Common myeloid progenitor, CD34-positive (primary cell): ENCODE measurements at regions of chr10 and their contacts with region 1.

Region 1: DNA sequence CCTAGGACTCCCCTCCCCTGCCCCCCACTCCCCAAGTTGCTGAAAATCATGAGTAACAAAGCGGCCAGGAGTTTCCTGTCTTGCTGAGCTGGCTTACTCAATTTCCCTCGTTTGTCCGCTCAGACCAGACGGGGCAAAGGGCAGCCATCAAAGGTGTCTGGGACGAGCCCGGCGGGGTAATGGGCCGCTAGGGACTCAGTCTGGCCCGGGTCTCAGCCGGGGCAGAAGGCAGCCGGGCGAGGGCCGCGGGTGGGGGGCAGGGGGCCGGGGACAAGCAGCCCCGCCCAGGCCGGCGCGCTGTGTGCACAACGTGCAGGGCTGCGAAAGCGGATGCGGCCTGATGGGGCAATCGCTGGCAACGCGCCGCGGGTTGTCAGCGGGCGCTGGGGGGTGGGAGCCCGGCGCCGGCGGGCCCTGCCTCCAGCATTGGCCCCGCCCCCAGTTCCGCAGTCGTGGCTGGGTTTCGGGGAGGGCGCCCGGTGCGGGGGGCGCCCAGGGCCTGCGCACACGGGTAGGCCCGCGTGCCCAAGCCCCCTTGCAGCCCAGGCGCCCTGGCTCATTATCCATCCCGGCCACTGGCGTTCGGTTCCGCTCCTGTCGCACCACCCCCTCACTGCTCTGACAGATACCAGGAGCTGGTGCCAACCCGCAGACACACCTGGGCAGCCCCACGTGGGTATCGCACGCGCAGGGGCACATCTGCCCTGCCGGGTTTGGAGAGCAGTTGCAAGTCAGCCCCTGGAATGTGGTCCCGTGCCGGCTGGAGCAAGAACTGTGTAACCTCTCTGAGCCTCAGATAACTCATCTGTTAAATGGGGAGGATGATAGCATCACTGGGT is 35.1 kb downstream of the DNAJB12 start:
- DNase-seq: peak; percentile 88 to 94 (median 93)
- H3K4me3 ChIP-seq: peak overlapping the region in 5 of 7 experiments; percentile 40 to 71 (median 50)
- H3K27ac ChIP-seq: peak overlapping the region; percentile 78 to 94
- H3K4me1 ChIP-seq: peaks cover 22 to 94% (median 92%) of the 10 kb centered on the region in 4 experiments
- H3K27me3 ChIP-seq: no peaks in the 10 kb centered on the region

Region 2: GRCh38 chr10:72297968-72298773 is 21.5 kb before region 1 on chr10:
- CTCF ChIA-PET with region 1: interaction called, 48 read pairs
- POLR2A ChIA-PET with region 1: interaction called, 29 read pairs
- DNase-seq: peak; percentile 94 to 97 (median 97)
- H3K4me3 ChIP-seq: peak overlapping the region in 6 of 7 experiments; percentile 13 to 72 (median 56)
- H3K27ac ChIP-seq: peak overlapping the region; percentile 40 to 87
- H3K4me1 ChIP-seq: peaks cover 5 to 46% (median 30%) of the 10 kb centered on the region in 4 experiments
- H3K27me3 ChIP-seq: no peaks in the 10 kb centered on the region

Region 3: GRCh38 chr10:72308320-72308987 is 11.2 kb before region 1 on chr10:
- CTCF ChIA-PET with region 1: interaction called, 48 read pairs
- POLR2A ChIA-PET with region 1: interaction called, 6 read pairs
- DNase-seq: peak; percentile 73 to 92 (median 89)
- H3K4me3 ChIP-seq: peak overlapping the region in 1 of 7 experiments; percentile 11
- H3K27ac ChIP-seq: peak overlapping the region in 1 of 2 experiments; percentile 38
- H3K4me1 ChIP-seq: peaks cover 8 to 54% (median 36%) of the 10 kb centered on the region in 4 experiments
- H3K27me3 ChIP-seq: no peaks in the 10 kb centered on the region

Region 4: GRCh38 chr10:72419241-72419640 is 99.6 kb after region 1 on chr10:
- CTCF ChIA-PET with region 1: no interaction called
- POLR2A ChIA-PET with region 1: no interaction called
- DNase-seq: no peak
- H3K4me3 ChIP-seq: no peak overlapping the region
- H3K27ac ChIP-seq: no peak overlapping the region
- H3K4me1 ChIP-seq: no peaks in the 10 kb centered on the region
- H3K27me3 ChIP-seq: no peaks in the 10 kb centered on the region

Region 5: DNA sequence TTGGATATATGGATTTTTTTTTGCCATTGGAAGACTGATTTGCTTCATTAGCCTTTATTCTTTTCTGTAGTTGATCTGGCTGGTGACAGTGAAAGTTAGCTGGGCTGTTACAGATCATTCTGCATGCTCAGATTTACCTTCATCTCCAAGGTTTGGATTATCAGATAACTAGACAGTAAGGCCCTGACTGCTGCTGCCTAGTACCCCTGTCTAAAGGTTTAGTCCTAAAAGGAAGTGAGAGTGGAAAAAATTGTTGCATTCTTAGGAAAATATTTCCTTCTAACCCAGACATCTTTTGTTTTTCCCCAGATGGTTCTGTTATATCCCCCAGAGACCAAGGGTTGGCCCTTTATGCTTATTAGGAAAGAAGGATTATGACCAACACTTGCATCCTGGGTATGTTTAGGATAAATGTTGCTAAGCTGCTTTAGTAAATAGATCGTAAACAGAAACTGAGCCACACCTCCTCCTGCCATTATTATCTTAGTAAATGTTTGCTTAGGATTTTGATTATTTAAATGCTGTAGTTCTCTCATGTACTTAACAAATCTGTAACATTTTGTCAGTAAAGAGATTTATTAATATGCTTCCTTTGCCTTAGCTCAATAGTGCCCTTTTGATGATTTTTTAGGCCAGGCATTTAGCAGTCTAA is 416.7 kb after region 1 on chr10:
- CTCF ChIA-PET with region 1: no interaction called
- POLR2A ChIA-PET with region 1: no interaction called
- DNase-seq: no peak
- H3K4me3 ChIP-seq: no peak overlapping the region
- H3K27ac ChIP-seq: no peak overlapping the region
- H3K4me1 ChIP-seq: peaks cover 3 to 10% (median 7%) of the 10 kb centered on the region in 4 experiments
- H3K27me3 ChIP-seq: no peaks in the 10 kb centered on the region